Posterior cingulate gyrus (tissue), 11 donors: ENCODE measurements at regions of chrX and their contacts with region 1.

Region 1: GRCh38 chrX:54808605-54809483 is 1.3 kb downstream of the MAGED2 start:
- DNase-seq: peak; percentile 80 to 97 (median 85)

Region 2: DNA sequence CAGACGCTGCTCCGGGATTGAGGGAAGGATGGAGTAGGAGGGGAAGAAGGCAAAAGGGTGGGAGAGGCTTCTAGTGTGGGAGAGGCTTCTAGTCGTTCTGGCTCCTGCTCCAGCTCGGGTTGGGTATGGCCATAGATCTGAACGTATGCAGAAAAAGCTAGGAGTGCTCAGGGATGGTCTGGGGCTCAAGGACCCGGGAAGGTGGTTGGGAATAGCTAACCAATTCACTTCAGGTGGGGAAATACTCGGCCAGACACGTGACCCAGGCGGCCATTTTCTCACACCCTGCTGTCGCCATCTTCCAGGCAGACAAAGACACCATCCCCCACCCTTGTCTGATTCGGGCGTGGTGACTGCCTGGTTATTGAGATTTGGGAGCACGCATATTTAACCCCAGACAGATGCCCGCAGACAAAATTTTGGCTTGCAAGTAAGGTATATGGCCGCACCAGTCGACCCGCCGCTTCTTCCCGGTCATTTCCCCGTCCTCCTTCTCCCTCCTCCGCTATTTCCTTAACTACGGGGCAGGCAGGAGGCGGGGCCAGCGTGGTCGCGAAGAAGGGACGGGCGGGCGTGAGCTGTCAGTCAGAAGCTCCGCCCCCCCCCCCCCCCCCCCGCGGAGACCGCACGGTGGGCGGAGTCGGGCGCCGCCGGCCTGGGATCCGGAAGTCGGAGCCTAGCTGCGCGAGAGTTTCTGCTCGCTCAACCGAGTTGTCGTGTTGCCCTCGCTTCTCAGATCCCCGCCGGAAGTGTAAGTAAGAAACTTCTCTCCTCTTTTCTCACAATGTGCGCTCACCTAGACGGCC is 279.1 kb before region 1 on chrX and contains the start of gene GNL3L:
- intact Hi-C with region 1: loop called (anchors 2 kb)
- DNase-seq: peak; percentile 70 to 98 (median 78)

Region 3: GRCh38 chrX:54639346-54640102 is 169.3 kb before region 1 on chrX:
- intact Hi-C with region 1: loop called (anchors 5 kb)
- DNase-seq: peak; percentile 78 to 98 (median 84)

Region 4: GRCh38 chrX:54999717-55000598 is 191.1 kb after region 1 on chrX and contains the start of gene APEX2:
- intact Hi-C with region 1: loop called (anchors 2 kb)
- DNase-seq: peak; percentile 74 to 98 (median 84)